H1 (cell line): ENCODE measurements at regions of chr4 and their contacts with region 1.

Region 1: GRCh38 chr4:134762053-134762452 is 560.5 kb upstream of the PABPC4L start:
- DNase-seq: peak in 1 of 2 experiments; percentile 50
- H3K4me3 ChIP-seq: no peak overlapping the region
- H3K27ac ChIP-seq: no peak overlapping the region
- H3K4me1 ChIP-seq: no peaks in the 10 kb centered on the region
- H3K27me3 ChIP-seq: no peaks in the 10 kb centered on the region
- CTCF ChIP-seq: peak in 2 of 3 experiments; percentile 19 to 56; a peak in 3 of 4 replicates
- EP300 ChIP-seq: no peak
- POLR2A ChIP-seq: no peak
- RAD21 ChIP-seq: peak; percentile 28 to 48; a peak in 3 of 4 replicates

Region 2: DNA sequence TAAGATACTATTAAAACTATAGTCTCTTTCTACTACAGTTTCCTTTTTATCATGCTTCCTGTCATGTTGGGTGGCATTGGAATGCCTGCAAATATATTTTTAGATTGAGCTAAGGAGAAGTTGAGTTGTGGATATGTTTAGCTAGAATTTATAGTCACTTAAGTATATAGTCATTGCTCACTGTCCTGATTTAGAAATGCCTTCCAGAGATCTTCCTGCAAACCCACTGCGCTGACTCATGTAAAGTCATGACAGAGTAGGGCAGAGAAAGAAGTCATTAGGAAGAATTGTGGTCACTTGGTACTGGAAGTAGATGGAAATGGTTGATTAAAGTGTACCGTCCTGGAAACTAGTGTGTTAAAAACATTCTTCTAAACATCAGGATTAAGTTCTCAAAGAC is 70.1 kb before region 1 on chr4:
- CTCF ChIA-PET with region 1: no interaction called
- POLR2A ChIA-PET with region 1: no interaction called
- DNase-seq: no peak
- H3K4me3 ChIP-seq: no peak overlapping the region
- H3K27ac ChIP-seq: no peak overlapping the region
- H3K4me1 ChIP-seq: no peaks in the 10 kb centered on the region
- H3K27me3 ChIP-seq: no peaks in the 10 kb centered on the region
- CTCF ChIP-seq: no peak
- EP300 ChIP-seq: no peak
- POLR2A ChIP-seq: no peak
- RAD21 ChIP-seq: no peak

Region 3: GRCh38 chr4:134777606-134778005 is 15.6 kb after region 1 on chr4:
- CTCF ChIA-PET with region 1: interaction called, 21 read pairs
- POLR2A ChIA-PET with region 1: no interaction called
- DNase-seq: no peak
- H3K4me3 ChIP-seq: no peak overlapping the region
- H3K27ac ChIP-seq: no peak overlapping the region
- H3K4me1 ChIP-seq: no peaks in the 10 kb centered on the region; a peak in 1 of 7 replicates
- H3K27me3 ChIP-seq: no peaks in the 10 kb centered on the region
- CTCF ChIP-seq: peak in 2 of 3 experiments; percentile 32 to 33; a peak in 2 of 4 replicates
- EP300 ChIP-seq: no peak
- POLR2A ChIP-seq: no peak
- RAD21 ChIP-seq: peak; percentile 75 to 78